Mammary epithelial cell (primary cell): ENCODE measurements at regions of chr3 and their contacts with region 1.

Region 1: GRCh38 chr3:46049116-46049515 is 21.8 kb upstream of the XCR1 start:
- DNase-seq: no peak
- H3K4me3 ChIP-seq: no peak overlapping the region
- H3K27ac ChIP-seq: no peak overlapping the region
- H3K4me1 ChIP-seq: no peaks in the 10 kb centered on the region
- H3K27me3 ChIP-seq: no peaks in the 10 kb centered on the region
- CTCF ChIP-seq: no peak

Region 2: DNA sequence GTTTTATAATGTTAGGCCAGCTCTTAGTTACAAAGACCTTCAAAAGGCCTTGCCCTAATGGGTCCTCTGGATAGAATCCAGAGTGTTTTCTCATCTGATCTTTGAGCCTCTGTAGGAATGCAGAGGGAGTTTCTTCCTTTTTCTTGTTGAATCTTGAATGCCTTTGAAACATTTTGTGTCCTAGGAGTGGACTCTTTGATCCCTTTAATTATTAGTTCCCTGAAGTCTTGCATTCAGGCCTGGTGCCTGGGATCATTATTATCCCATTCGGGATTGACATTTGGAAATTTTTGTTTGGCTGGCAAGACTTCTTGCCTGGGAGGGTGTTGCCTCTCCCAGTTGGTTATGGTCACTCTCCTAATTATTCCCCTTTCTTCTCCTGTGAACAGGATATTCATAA is 67.5 kb after region 1 on chr3:
- CTCF ChIA-PET with region 1: no interaction called
- dilution Hi-C with region 1: loop called (anchors 5 kb)
- in situ Hi-C with region 1: no loop called
- intact Hi-C with region 1: no loop called
- DNase-seq: no peak
- H3K4me3 ChIP-seq: no peak overlapping the region
- H3K27ac ChIP-seq: no peak overlapping the region
- H3K4me1 ChIP-seq: peaks cover 48% of the 10 kb centered on the region
- H3K27me3 ChIP-seq: no peaks in the 10 kb centered on the region
- CTCF ChIP-seq: no peak